Activated T-helper 2 cell treated with anti-CD3 and anti-CD28 coated beads, Interferon-gamma antibody, Interleukin-2, Interleukin-4, amounts not matched to agents 10 μg/mL and 5 μg/mL and 100 μg/mL, durations not matched to agents 14 hours and 24 hours and 36 hours (primary cell): ENCODE measurements at regions of chr5 and their contacts with region 1.

Region 1: GRCh38 chr5:55037046-55037771 is 13.2 kb downstream of the GZMK start:
- DNase-seq: peak; percentile 69
- H3K4me3 Mint-ChIP-seq: no peak overlapping the region
- H3K27ac Mint-ChIP-seq: peak overlapping the region; percentile 93
- H3K4me1 Mint-ChIP-seq: peaks cover 42% of the 10 kb centered on the region
- H3K27me3 Mint-ChIP-seq: no peaks in the 10 kb centered on the region

Region 2: DNA sequence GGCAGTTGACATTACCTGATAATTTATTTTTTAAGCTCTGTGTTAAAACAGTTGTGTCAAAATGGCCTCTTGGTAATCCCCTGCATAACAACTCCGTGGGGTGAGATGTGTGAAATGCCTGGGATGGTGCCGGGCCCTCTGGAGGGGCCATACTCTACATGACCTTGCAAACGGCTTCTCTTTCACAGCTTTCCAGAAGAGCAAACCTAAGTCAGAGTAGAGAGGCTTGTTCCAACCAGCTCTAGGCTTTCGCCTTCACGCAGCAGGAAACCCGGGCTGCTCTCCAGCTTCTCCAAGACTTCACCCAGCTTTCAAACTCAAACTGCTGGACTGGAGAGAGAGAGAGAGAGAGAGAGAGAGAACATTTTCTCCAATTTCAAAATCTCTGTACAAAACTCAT is 399.6 kb before region 1 on chr5:
- intact Hi-C with region 1: no loop called
- DNase-seq: no peak
- H3K4me3 Mint-ChIP-seq: no peak overlapping the region
- H3K27ac Mint-ChIP-seq: no peak overlapping the region
- H3K4me1 Mint-ChIP-seq: peaks cover 17% of the 10 kb centered on the region
- H3K27me3 Mint-ChIP-seq: no peaks in the 10 kb centered on the region

Region 3: DNA sequence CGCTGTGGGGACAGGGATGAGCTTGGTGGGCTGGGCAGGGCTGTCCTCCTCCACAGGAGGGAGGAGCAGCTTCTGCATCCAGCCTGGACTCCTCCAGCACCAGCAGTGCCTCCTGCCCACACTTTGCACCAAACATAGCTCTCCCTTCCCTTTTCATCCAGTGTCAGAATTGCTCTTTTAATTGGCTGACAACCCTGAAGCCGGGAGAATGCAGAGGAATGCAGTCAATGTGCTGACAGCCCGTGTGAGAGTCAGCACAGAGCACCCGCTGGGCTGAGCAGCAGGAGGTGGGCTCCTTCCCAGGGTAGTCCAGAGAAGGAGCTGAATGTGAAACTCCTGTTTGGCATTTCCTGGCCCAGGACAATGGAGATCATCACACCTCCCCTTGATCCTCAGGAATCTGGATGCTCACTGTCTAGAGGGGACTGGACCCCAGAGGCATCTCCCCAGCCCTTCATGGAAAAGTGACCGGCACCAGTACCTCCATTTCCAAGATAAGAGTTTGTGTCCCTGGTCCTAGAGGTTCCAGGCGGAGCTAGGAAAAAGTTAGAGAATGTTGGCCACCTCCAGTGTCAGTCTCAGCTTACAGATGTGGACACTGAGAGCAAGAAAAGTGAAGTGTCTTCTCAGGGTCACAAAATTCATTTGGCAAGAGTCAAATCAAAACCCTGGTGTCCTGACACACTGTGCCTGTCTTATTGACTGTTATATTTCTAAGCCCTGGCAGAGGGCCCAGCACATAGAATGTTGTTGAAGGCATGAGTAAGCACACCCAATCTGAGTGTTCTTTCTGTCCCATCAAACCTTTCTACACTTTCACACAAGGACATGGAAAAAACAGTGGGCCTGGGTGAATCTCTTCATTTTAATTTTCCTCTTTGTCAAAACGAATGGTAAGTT is 317.6 kb before region 1 on chr5:
- intact Hi-C with region 1: loop called (anchors 10 kb)
- DNase-seq: no peak
- H3K4me3 Mint-ChIP-seq: no peak overlapping the region
- H3K27ac Mint-ChIP-seq: peak overlapping the region; percentile 54
- H3K4me1 Mint-ChIP-seq: peaks cover 47% of the 10 kb centered on the region
- H3K27me3 Mint-ChIP-seq: no peaks in the 10 kb centered on the region

Region 4: DNA sequence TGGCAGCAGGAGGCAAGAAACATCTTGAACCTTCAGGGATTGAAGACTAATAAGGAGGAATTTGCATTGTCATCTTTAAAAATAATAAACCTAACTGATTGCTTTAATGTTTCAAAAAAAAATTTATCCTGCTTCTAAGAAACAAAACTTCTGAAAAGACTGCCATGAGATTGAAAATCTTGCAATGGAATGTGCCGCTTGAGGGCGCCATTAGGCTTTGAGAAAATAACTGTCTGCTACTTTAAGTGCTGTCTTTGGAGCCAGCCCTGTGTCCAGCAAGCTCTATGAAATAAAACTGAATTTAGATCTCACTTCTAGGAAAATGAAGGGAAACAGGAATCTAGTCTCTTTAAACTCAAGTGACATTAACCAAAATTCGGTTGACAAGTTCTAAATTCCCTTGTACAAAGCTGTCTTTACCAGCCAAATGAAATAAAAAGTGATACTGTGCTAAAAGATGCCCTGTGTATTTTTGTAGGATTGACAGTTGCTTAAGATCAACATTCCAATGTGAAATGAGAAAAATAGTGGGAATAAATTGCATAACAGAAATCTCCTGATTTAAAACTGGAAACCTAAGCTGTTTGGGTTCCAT is 131.2 kb before region 1 on chr5:
- intact Hi-C with region 1: loop called (anchors 1 kb)
- DNase-seq: peak; percentile 50
- H3K4me3 Mint-ChIP-seq: no peak overlapping the region
- H3K27ac Mint-ChIP-seq: no peak overlapping the region
- H3K4me1 Mint-ChIP-seq: peaks cover 65% of the 10 kb centered on the region
- H3K27me3 Mint-ChIP-seq: peaks cover 29% of the 10 kb centered on the region

Region 5: GRCh38 chr5:54990841-54991258 is 46.4 kb before region 1 on chr5:
- intact Hi-C with region 1: loop called (anchors 2 kb)
- DNase-seq: no peak
- H3K4me3 Mint-ChIP-seq: no peak overlapping the region
- H3K27ac Mint-ChIP-seq: no peak overlapping the region
- H3K4me1 Mint-ChIP-seq: peaks cover 70% of the 10 kb centered on the region
- H3K27me3 Mint-ChIP-seq: peaks cover 8% of the 10 kb centered on the region

Region 6: GRCh38 chr5:55062039-55062779 is 25.0 kb after region 1 on chr5:
- intact Hi-C with region 1: loop called (anchors 1 kb)
- DNase-seq: peak; percentile 78
- H3K4me3 Mint-ChIP-seq: peak overlapping the region; percentile 64
- H3K27ac Mint-ChIP-seq: peak overlapping the region; percentile 94
- H3K4me1 Mint-ChIP-seq: peaks cover 70% of the 10 kb centered on the region
- H3K27me3 Mint-ChIP-seq: no peaks in the 10 kb centered on the region

Region 7: DNA sequence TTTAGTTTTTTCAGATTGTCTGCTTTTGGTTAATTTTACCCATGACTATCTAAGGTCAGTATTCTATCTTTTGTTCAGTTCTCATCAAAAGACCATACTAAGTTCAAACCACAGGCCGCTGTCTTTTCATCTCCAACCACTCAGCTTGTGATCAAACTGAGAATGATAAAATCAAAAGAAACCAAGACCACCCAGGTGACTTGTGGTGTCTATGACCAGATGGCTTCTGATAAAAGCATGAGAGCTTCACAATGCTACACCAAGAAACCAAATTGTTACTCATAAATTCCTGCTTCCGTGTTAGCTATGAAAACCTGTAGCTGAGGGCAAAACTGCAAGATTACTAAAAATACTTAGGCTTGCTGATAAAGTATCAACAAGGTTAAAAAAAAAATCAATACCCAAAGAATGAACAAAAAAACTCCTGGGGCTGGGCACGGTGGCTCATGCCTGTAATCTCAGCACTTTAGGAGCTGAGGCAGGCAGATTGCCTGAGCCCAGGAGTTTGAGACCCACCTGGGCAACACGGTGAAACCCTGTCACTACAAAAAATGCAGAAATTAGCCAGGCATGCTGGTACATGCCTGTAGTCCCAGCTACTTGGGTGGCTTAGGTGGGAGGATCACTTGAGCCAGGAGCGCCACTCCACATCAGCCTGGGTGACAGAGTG is 97.0 kb after region 1 on chr5:
- intact Hi-C with region 1: loop called (anchors 1 kb)
- DNase-seq: peak; percentile 44
- H3K4me3 Mint-ChIP-seq: no peak overlapping the region
- H3K27ac Mint-ChIP-seq: peak overlapping the region; percentile 39
- H3K4me1 Mint-ChIP-seq: peaks cover 41% of the 10 kb centered on the region
- H3K27me3 Mint-ChIP-seq: peaks cover 2% of the 10 kb centered on the region

Region 8: GRCh38 chr5:55146543-55147151 is 109.4 kb after region 1 on chr5:
- intact Hi-C with region 1: loop called (anchors 1 kb)
- DNase-seq: peak; percentile 80
- H3K4me3 Mint-ChIP-seq: peak overlapping the region; percentile 23
- H3K27ac Mint-ChIP-seq: no peak overlapping the region
- H3K4me1 Mint-ChIP-seq: peaks cover 46% of the 10 kb centered on the region
- H3K27me3 Mint-ChIP-seq: peaks cover 23% of the 10 kb centered on the region